Endothelial cell of umbilical vein (primary cell): ENCODE measurements at regions of chr6 and their contacts with region 1.

Region 1: GRCh38 chr6:97215157-97215769 is 67.8 kb downstream of the MMS22L start:
- DNase-seq: peak; percentile 71
- H3K4me3 ChIP-seq: no peak overlapping the region
- H3K27ac ChIP-seq: peak overlapping the region; percentile 11
- H3K4me1 ChIP-seq: no peaks in the 10 kb centered on the region
- H3K27me3 ChIP-seq: no peaks in the 10 kb centered on the region
- CTCF ChIP-seq: peak; percentile 46 to 55
- POLR2A ChIP-seq: no peak

Region 2: DNA sequence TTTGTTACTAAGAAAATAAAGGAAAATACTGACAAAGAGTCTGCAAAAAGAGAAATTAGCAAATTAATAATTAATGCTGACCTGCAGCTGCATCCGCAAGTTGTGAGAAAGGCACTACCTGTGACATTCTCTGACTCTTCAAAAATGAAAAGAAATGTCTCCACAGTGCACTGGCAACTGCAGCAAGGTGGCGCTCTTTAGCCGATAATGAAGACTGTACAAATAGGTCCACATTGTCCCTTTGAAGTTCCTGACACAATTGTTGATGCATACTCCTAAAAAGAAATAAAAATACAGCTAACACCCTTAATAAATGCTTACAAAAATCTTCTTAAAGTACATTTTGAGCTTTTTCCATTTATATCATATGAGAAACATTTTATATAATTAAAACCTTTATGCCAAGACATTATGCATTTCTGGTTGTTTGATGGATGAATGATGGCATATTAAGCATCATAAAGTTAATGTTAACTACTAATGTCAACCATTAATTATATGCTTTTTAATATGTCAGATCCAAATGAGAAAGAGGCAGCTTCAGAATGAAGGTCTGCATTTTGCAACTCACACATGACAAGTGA is 28.8 kb before region 1 on chr6:
- CTCF ChIA-PET with region 1: interaction called, 99 read pairs
- POLR2A ChIA-PET with region 1: interaction called, 4 read pairs
- dilution Hi-C with region 1: no loop called
- intact Hi-C with region 1: loop called (anchors 1 kb)
- DNase-seq: peak; percentile 77
- H3K4me3 ChIP-seq: no peak overlapping the region
- H3K27ac ChIP-seq: no peak overlapping the region
- H3K4me1 ChIP-seq: peaks cover 32% of the 10 kb centered on the region
- H3K27me3 ChIP-seq: no peaks in the 10 kb centered on the region
- CTCF ChIP-seq: peak; percentile 77 to 85
- POLR2A ChIP-seq: no peak

Region 3: GRCh38 chr6:97203343-97203742 is 11.9 kb before region 1 on chr6:
- CTCF ChIA-PET with region 1: interaction called, 28 read pairs
- POLR2A ChIA-PET with region 1: no interaction called
- dilution Hi-C with region 1: no loop called
- intact Hi-C with region 1: no loop called
- DNase-seq: no peak
- H3K4me3 ChIP-seq: no peak overlapping the region
- H3K27ac ChIP-seq: no peak overlapping the region
- H3K4me1 ChIP-seq: no peaks in the 10 kb centered on the region
- H3K27me3 ChIP-seq: no peaks in the 10 kb centered on the region
- CTCF ChIP-seq: no peak
- POLR2A ChIP-seq: no peak

Region 4: DNA sequence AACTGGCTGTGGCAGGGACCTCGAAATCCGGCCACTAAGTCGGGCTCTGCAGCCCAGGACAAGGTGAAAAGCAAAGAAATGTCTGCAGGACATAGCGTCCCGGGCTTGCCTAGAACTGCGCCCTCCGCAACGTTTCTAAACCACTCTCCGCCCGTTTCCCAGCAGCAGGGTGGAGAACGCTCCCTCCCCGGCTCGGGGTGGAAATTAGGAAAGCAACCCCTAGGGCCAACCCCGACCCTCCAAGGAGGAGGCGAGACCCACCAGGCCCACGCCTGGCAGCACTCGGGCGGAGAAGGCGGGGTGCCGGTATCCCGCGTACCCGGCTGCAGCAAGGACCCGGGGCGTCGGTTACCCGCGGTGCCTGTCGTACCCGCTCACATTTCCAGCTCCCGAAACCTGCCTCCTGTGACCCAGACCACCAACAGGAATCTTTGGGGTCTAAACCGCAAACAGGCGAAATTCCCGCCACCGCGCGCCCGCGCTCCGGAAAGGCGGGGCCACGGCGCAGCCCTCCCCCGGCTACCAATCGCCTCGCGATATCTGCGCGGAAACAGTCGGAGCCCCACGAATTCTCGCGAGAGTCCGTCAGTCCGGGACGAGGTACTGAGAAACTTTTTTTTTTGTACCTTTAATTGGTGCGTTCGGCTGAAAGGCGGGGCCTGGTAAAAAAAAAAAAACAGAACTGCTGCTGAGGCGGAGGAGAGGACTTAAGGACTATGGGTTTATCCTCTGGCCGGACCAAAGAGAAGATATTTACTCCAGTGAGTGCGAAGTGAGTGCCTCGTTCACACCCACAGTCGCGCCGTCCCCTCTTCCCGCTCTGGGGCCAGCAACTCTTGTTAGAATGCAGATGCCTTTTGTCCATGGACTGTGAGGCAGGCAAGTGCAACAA is 67.7 kb after region 1 on chr6 and contains the start of gene MMS22L:
- CTCF ChIA-PET with region 1: interaction called, 39 read pairs
- POLR2A ChIA-PET with region 1: no interaction called
- dilution Hi-C with region 1: no loop called
- intact Hi-C with region 1: loop called (anchors 2 kb)
- DNase-seq: peak; percentile 95
- H3K4me3 ChIP-seq: peak within 1 kb of the TSS; percentile 75 to 93 (median 86)
- H3K27ac ChIP-seq: peak within 1 kb of the TSS; percentile 60
- H3K4me1 ChIP-seq: peaks cover 21% of the 10 kb centered on the region
- H3K27me3 ChIP-seq: no peaks in the 10 kb centered on the region
- CTCF ChIP-seq: no peak
- POLR2A ChIP-seq: no peak
- total RNA-seq, gene MMS22L: 19.3 and 22.7 TPM in 2 replicates

Region 5: GRCh38 chr6:97361286-97361685 is 146.0 kb after region 1 on chr6:
- CTCF ChIA-PET with region 1: interaction called, 10 read pairs
- POLR2A ChIA-PET with region 1: no interaction called
- dilution Hi-C with region 1: no loop called
- intact Hi-C with region 1: no loop called
- DNase-seq: peak; percentile 3
- H3K4me3 ChIP-seq: no peak overlapping the region
- H3K27ac ChIP-seq: no peak overlapping the region
- H3K4me1 ChIP-seq: no peaks in the 10 kb centered on the region
- H3K27me3 ChIP-seq: peaks cover 0 to 8% of the 10 kb centered on the region in 2 experiments
- CTCF ChIP-seq: no peak
- POLR2A ChIP-seq: no peak

Region 6: GRCh38 chr6:97437087-97437486 is 221.8 kb after region 1 on chr6:
- CTCF ChIA-PET with region 1: interaction called, 21 read pairs
- POLR2A ChIA-PET with region 1: no interaction called
- dilution Hi-C with region 1: no loop called
- intact Hi-C with region 1: loop called (anchors 1 kb)
- DNase-seq: peak; percentile 34
- H3K4me3 ChIP-seq: no peak overlapping the region
- H3K27ac ChIP-seq: no peak overlapping the region
- H3K4me1 ChIP-seq: no peaks in the 10 kb centered on the region
- H3K27me3 ChIP-seq: peaks cover 4 to 16% of the 10 kb centered on the region in 2 experiments
- CTCF ChIP-seq: peak; percentile 64 to 69
- POLR2A ChIP-seq: no peak

Region 7: GRCh38 chr6:97456070-97456469 is 240.8 kb after region 1 on chr6:
- CTCF ChIA-PET with region 1: no interaction called
- POLR2A ChIA-PET with region 1: no interaction called
- dilution Hi-C with region 1: no loop called
- intact Hi-C with region 1: no loop called
- DNase-seq: no peak
- H3K4me3 ChIP-seq: no peak overlapping the region
- H3K27ac ChIP-seq: no peak overlapping the region
- H3K4me1 ChIP-seq: no peaks in the 10 kb centered on the region
- H3K27me3 ChIP-seq: no peaks in the 10 kb centered on the region
- CTCF ChIP-seq: no peak
- POLR2A ChIP-seq: no peak